Uterus (tissue), 4 donors: ENCODE measurements at regions of chr3 and their contacts with region 1.

Region 1: DNA sequence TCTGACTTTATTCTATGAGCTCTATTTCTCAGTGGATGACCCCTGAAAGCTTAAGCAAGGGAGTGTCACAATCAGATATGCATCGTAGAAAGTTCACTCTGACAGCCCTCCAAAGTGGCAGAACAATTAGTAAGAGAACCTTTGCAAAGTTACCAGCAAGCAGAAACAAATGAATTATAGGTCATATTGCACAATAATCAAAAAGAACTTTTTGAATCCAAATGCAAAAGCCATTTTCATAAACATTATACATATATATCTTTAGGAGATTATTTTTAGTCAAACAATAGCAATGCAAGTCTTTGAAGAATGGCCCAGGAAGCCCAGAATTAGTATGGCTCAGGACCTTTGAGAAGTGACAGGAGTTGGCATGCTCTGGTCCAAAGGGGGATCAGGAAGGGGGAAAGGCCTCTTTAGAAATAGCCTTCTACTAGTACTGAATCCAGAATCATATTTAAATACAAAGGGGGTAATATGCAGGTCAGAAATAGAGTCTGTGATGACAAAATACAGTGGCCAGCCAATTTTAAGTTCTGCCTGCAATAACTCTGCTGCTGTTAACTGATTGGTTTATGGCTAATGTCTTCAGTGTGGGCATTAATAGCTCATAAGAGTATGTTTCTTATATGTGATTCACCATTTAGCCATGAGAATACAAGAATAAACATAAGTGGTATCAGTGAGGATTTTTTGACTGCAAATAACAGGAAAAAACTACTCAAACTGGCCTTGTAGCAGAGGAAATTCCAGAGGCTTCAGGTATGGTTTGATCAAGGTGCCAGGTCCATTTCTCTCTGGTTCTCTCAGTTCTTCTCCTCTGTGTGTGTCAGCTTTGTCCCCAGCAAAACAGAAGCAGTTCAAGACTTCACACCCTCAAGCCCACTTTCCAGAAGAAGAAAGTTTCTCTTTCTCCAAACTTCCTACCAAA is 17.0 kb upstream of the ITGB5 start:
- DNase-seq: no peak
- H3K4me3 ChIP-seq: no peak overlapping the region
- H3K27ac ChIP-seq: no peak overlapping the region
- H3K4me1 ChIP-seq: no peaks in the 10 kb centered on the region
- H3K27me3 ChIP-seq: no peaks in the 10 kb centered on the region
- CTCF ChIP-seq: no peak
- POLR2A ChIP-seq: no peak

Region 2: GRCh38 chr3:124281453-124282316 is 622.5 kb before region 1 on chr3:
- intact Hi-C with region 1: no loop called
- DNase-seq: no peak
- H3K4me3 ChIP-seq: no peak overlapping the region
- H3K27ac ChIP-seq: peak overlapping the region; percentile 81 to 83
- H3K4me1 ChIP-seq: peaks cover 7 to 25% of the 10 kb centered on the region in 2 donors
- H3K27me3 ChIP-seq: no peaks in the 10 kb centered on the region
- CTCF ChIP-seq: peak; percentile 52 to 80 (median 69)
- POLR2A ChIP-seq: no peak

Region 3: DNA sequence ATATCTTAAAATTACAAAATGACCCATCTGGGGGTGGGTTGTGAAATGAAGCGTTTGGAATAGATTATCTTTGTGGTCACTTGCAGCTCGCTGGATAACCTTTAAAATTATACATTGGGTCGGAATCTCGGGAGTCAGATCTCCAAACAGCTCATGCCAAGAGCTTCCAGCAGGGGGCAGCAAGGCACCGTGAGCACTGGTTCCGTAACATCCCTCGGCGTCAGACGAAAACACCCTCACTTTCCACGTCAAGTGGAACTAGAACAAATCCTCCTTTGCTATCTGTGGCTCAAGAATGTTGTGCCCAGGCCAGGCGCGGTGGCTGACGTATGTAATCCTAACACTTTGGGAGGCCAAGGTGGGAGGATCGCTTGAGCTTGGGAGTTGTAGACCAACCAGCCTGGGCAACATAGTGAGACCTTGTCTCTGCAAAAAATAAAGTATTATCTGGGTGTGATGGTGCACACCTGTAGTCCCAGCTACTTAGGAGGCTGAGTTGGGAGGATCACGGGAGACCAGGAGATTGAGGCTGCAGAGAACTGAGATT is 142.8 kb before region 1 on chr3:
- intact Hi-C with region 1: loop called (anchors 5 kb)
- DNase-seq: peak; percentile 92 to 93
- H3K4me3 ChIP-seq: no peak overlapping the region
- H3K27ac ChIP-seq: peak overlapping the region; percentile 51 to 68
- H3K4me1 ChIP-seq: no peaks in the 10 kb centered on the region
- H3K27me3 ChIP-seq: no peaks in the 10 kb centered on the region
- CTCF ChIP-seq: peak; percentile 94 to 97 (median 96)
- POLR2A ChIP-seq: no peak

Region 4: GRCh38 chr3:124834723-124835718 is 69.2 kb before region 1 on chr3:
- intact Hi-C with region 1: no loop called
- DNase-seq: peak; percentile 60 to 76
- H3K4me3 ChIP-seq: no peak overlapping the region
- H3K27ac ChIP-seq: peak overlapping the region; percentile 76 to 91
- H3K4me1 ChIP-seq: peaks cover 11 to 23% of the 10 kb centered on the region in 2 donors
- H3K27me3 ChIP-seq: no peaks in the 10 kb centered on the region
- CTCF ChIP-seq: no peak
- POLR2A ChIP-seq: no peak